MCF 10A (cell line): ENCODE measurements at regions of chr11 and their contacts with region 1.

Region 1: GRCh38 chr11:10933455-10934292 is 75.8 kb upstream of the ZBED5 start:
- DNase-seq: peak; percentile 93
- H3K4me3 Mint-ChIP-seq: peak overlapping the region; percentile 80
- H3K27ac Mint-ChIP-seq: peak overlapping the region; percentile 29
- H3K4me1 Mint-ChIP-seq: peaks cover 25% of the 10 kb centered on the region
- H3K27me3 Mint-ChIP-seq: no peaks in the 10 kb centered on the region
- CTCF ChIP-seq: peak; percentile 90

Region 2: DNA sequence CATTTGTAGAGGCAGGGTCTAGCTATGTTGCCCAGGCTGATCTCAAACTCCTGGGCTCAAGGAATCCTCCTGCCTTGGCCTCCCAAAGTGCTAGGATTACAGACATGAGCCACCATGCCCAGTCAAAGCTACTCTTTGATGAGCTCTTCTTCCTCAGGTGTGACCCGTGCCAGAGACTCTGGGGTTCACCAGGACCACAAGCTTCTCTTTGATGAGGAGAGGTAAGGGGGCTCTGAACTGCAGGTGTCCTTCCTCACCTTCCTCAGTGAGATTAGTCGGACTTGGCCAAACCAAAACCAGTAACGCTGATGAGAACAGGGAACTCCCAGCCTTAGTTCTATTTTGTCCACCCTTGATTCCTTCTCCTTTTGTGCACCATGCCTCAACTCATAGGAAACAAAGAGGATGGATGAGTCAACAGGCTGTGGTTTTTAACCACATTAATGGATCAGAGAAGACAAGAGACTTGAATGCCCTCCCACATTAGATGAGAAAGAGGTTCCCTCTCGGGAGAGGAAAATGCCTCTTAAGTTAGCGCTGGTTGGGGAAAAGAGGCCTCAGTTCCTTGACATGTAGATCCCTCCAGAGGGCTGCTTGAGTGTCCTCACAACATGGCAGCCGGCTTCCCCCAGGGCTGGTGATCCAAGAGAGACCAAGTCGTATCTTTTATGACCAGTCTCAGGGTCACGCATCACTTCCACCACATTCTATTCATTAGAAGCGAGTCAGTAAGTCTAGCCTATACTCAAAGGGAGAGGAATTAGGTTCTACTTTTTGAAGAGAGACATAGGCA is 208.4 kb before region 1 on chr11:
- CTCF ChIA-PET with region 1: no interaction called
- POLR2A ChIA-PET with region 1: no interaction called
- intact Hi-C with region 1: no loop called
- DNase-seq: peak; percentile 66
- H3K4me3 Mint-ChIP-seq: no peak overlapping the region
- H3K27ac Mint-ChIP-seq: no peak overlapping the region
- H3K4me1 Mint-ChIP-seq: no peaks in the 10 kb centered on the region
- H3K27me3 Mint-ChIP-seq: peaks cover 17% of the 10 kb centered on the region
- CTCF ChIP-seq: no peak

Region 3: DNA sequence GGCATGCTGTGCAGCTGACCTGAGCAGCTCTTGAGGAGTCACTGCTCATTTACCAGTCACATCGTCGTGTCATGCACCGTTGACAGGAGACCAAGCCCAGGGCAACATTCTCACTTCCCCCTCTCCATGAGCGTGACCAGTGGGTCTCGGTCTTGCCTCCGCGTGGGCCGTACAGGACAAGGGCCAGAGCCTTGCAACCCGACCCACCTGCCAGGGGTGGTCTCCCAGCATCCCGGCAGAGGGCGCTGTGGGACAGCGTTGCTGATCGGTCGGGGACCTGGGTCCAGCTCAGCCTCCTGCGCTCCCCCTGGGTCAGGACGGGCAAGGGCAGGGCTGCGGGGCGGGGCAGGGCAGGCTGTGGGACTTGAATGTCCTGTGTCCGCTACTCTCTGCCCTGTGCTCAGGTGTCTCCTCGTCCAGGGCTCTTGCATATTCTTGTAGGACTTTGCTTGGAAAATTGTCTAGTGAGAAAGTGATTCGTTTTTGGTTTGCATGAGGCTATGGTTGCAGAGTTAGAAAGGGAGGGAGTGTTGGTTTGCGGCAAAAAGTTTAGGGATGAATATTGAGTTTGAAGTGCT is 141.2 kb before region 1 on chr11:
- CTCF ChIA-PET with region 1: interaction called, 12 read pairs
- POLR2A ChIA-PET with region 1: interaction called, 4 read pairs
- intact Hi-C with region 1: loop called (anchors 1 kb)
- DNase-seq: peak; percentile 88
- H3K4me3 Mint-ChIP-seq: no peak overlapping the region
- H3K27ac Mint-ChIP-seq: no peak overlapping the region
- H3K4me1 Mint-ChIP-seq: peaks cover 8% of the 10 kb centered on the region
- H3K27me3 Mint-ChIP-seq: no peaks in the 10 kb centered on the region
- CTCF ChIP-seq: peak; percentile 96

Region 4: DNA sequence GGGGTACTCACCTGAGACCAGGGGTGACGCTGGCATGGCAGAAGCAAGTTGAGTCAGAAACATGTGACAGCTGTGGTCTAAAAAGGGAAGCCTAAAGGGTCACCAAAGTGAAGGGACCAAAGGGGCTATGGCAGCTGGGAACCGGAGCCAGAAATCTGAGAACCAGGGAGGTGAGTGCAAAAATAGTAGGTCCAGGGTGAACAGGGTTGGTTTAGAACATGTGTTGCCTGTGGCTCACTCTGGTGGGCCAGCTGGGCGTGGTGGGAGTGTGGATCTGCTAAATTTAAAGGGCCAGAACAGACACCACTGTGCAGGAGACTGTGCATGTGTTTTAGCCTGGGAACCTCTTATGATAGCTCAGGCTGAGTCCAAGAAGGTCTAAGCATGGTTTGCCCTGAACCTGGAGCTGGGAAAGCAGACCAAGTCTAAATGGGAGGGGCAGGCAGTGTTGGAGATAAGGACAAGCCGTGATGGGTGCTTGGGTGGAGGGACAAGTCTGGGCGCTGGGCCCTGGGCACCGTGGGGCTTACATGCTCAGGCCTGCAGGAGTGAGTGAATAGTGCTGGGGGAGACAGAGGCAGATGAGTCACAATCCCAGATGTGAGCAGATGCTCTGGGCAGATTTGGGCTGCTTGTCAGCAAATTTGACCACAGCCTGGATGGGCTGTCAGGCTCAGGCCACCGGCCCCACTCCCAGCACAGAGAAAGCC is 34.4 kb before region 1 on chr11:
- CTCF ChIA-PET with region 1: interaction called, 10 read pairs
- POLR2A ChIA-PET with region 1: interaction called, 24 read pairs
- intact Hi-C with region 1: no loop called
- DNase-seq: peak; percentile 96
- H3K4me3 Mint-ChIP-seq: peak overlapping the region; percentile 58
- H3K27ac Mint-ChIP-seq: peak overlapping the region; percentile 98
- H3K4me1 Mint-ChIP-seq: peaks cover 62% of the 10 kb centered on the region
- H3K27me3 Mint-ChIP-seq: no peaks in the 10 kb centered on the region
- CTCF ChIP-seq: no peak

Region 5: DNA sequence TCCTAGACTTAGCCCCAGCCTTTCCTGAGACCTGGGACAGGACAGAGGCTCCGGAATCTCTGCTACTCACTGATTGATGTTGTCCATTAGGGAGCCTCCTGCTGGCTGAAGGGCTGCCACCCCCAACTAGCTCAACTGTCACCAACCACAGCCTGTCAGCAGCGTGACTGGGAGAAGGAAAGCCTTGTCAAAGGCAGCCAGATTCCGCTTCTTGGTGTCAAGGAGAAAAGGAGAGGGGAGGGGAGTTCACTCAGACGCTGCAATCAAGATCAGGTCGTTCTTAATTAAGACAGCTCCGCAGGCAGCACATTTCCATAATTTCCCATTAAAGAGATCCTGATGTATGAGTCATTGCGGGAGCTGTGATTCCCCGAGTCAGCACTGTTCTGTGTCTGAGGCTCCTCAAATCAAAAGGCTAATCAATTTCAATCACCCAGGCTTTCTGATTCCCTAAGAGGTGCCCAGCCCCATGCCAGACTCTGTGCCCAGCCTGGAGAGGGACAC is 77.0 kb after region 1 on chr11:
- CTCF ChIA-PET with region 1: interaction called, 12 read pairs
- POLR2A ChIA-PET with region 1: interaction called, 12 read pairs
- intact Hi-C with region 1: no loop called
- DNase-seq: peak; percentile 51
- H3K4me3 Mint-ChIP-seq: no peak overlapping the region
- H3K27ac Mint-ChIP-seq: no peak overlapping the region
- H3K4me1 Mint-ChIP-seq: peaks cover 7% of the 10 kb centered on the region
- H3K27me3 Mint-ChIP-seq: peaks cover 21% of the 10 kb centered on the region
- CTCF ChIP-seq: no peak

Region 6: GRCh38 chr11:11022125-11022730 is 88.6 kb after region 1 on chr11:
- CTCF ChIA-PET with region 1: interaction called, 58 read pairs
- POLR2A ChIA-PET with region 1: interaction called, 11 read pairs
- intact Hi-C with region 1: loop called (anchors 1 kb)
- DNase-seq: peak; percentile 36
- H3K4me3 Mint-ChIP-seq: no peak overlapping the region
- H3K27ac Mint-ChIP-seq: no peak overlapping the region
- H3K4me1 Mint-ChIP-seq: peaks cover 9% of the 10 kb centered on the region
- H3K27me3 Mint-ChIP-seq: no peaks in the 10 kb centered on the region
- CTCF ChIP-seq: peak; percentile 46

Region 7: DNA sequence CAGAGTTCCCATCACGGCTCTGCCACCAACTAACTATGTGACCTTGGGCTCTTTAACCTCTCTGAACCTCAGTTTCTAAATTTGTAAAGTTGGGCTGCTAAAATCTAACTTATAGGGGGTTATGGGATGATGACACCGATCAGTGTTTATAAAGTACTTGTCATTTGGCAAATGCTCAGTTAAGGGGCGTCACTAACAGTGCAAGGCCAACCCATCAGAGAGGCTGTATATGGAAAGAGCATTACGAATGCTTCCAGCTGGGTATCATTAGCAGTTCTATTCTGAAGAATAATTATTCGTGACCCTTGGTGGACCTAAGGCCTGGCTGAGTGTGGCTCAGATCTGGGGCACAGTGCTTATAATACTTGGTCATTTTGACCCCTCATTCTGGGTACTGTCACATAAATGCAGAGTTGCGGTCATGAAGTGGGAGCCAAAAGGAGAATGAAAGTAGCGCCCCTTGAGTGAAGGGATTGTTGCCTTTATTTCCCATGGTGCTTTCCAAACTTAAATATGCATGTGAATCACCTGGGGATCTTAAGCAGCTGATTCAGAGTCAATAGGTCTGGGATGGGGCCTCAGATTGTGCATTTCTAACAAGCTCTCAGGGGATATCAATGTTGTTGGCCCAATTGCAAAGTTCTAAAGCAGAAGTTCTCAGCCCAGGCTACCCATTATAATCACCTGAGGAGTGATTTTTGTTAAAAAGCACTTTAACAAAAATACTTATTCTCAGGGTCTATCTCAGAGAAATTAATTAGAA is 303.6 kb after region 1 on chr11:
- CTCF ChIA-PET with region 1: no interaction called
- POLR2A ChIA-PET with region 1: no interaction called
- intact Hi-C with region 1: no loop called
- DNase-seq: no peak
- H3K4me3 Mint-ChIP-seq: no peak overlapping the region
- H3K27ac Mint-ChIP-seq: no peak overlapping the region
- H3K4me1 Mint-ChIP-seq: no peaks in the 10 kb centered on the region
- H3K27me3 Mint-ChIP-seq: no peaks in the 10 kb centered on the region
- CTCF ChIP-seq: no peak

Region 8: DNA sequence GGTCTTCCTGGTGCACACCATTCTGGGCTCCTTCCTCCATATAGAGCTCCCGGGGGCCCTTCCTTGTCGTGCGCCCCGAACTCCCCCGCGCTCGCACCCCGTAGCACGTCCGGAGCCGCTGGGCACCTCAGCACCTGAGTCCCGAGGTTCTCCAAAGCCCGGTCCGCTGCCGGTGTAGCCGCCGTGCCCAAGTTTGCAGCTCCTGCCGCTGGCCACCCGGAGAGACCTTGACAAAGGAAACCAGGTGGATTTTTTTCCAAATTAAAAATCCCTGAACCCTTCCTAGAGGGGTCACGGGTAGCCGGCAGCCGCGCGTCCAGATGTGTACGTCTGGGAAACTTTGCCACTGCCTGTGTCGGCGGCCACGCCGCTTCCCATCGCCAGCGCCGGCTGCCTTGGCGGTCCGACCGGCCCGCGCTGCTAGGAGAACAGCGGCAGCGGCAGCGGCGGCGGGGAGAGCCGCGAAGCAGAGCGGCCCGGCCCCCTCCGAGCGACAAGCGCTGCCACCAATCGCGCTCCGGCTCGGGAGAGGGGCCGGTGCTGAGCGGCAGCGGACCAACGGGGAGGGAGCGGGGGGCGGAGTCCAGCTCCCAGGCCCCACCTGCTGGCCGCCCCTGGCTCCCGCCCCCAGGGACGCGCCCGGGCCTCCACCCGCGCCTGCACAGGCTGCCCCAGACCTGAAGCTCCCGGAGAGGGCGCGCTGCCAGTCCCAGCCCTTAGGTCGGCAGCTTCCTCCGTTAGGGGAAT is 688.1 kb after region 1 on chr11 and contains the start of gene GALNT18:
- CTCF ChIA-PET with region 1: interaction called, 6 read pairs
- POLR2A ChIA-PET with region 1: no interaction called
- intact Hi-C with region 1: loop called (anchors 5 kb)
- DNase-seq: peak; percentile 95
- H3K4me3 Mint-ChIP-seq: peak within 1 kb of the TSS; percentile 90
- H3K27ac Mint-ChIP-seq: peak within 1 kb of the TSS; percentile 51
- H3K4me1 Mint-ChIP-seq: peaks cover 34% of the 10 kb centered on the region
- H3K27me3 Mint-ChIP-seq: no peaks in the 10 kb centered on the region
- CTCF ChIP-seq: peak; percentile 29
- total RNA-seq, gene GALNT18: 9.0 and 14.1 TPM in 2 replicates